ENCODE measurements at regions of chr2 and their contacts with region 1.

Region 1: DNA sequence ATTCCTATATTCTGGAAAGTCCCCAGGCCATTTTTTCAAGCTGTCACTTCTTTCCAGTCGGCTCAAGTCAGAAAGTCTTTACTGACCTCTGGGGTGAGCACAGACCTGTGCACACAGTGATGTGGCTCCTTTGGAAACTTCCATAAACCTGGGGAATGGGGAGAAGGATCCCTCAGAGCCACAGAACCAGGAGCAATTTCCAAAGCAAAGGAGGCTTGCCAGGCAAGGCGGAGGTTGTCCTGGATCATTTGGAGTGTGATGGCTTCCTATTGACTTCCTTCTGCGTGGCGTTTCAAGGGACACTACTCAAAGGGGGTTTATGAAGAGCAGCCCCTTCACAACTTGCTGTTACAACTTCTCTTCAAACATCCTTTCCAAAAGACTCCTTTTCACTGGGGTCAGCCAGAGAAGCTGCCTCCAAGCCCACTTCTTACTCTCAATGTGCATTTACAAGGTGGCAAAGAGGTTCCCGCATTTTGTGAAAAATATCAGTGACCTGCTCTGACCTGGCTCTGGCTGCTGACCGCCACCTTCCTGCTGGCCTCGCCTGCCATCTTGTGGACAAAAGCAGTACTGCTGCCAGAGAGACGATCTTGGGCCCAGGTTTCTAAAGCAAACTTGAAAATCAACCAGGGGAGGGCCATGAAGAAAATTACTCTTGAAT is 18.2 kb upstream of the TMEM247 start:
- DNase-seq: peak; percentile 65 to 86
- H3K4me3 ChIP-seq: no peak overlapping the region
- H3K27ac ChIP-seq: no peak overlapping the region
- H3K4me1 ChIP-seq: peaks cover 7% of the 10 kb centered on the region
- H3K27me3 ChIP-seq: no peaks in the 10 kb centered on the region
- CTCF ChIP-seq: peak; percentile 100

Region 2: GRCh38 chr2:45643543-45644542 is 817.3 kb before region 1 on chr2:
- CTCF ChIA-PET with region 1: no interaction called
- POLR2A ChIA-PET with region 1: no interaction called
- intact Hi-C with region 1: loop called (anchors 2 kb)
- DNase-seq: peak in 1 of 2 experiments; percentile 72
- H3K4me3 ChIP-seq: peak overlapping the region; percentile 61
- H3K27ac ChIP-seq: no peak overlapping the region
- H3K4me1 ChIP-seq: peaks cover 9% of the 10 kb centered on the region; the same call in 1 of the 2 replicates
- H3K27me3 ChIP-seq: no peaks in the 10 kb centered on the region
- CTCF ChIP-seq: peak; percentile 99

Region 3: DNA sequence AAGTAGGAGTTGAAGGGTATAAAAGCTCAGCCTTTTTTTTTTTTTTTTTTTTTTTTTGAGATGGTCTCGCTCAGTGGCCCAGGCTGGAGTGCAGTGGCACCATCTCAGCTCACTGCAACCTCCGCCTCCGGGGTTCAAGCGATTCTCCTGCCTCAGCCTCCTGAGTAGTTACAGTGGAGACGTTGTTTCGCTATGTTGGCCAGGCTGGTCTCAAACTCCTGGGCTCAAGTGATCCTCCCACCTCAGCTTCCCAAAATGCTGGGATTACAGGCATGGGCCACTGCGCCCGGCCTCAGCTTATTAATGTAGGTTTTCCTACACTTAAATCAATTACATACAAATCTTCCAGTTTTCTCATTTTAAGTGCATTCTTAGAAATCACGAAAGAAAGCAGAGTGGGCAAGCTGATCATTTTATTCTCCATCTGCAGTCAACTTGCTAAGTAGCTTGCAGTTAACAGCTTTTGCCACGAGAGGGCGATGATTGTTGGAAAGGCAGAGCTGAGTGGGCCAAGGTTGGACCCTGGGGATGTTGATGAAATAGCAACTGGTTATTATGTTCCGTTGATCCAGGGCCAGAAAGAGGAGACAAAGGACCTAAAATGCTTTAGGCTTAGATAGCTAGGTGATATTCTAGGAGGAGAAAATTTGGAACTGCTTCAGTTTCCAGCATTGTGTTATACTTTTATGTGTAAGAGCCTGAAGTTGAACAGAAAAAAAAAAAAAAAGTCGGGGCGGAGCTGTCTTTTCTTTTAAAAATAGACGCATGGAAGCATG is 398.3 kb before region 1 on chr2:
- CTCF ChIA-PET with region 1: interaction called, 3 read pairs
- POLR2A ChIA-PET with region 1: no interaction called
- intact Hi-C with region 1: loop called (anchors 1 kb)
- DNase-seq: peak; percentile 65 to 76
- H3K4me3 ChIP-seq: no peak overlapping the region
- H3K27ac ChIP-seq: no peak overlapping the region
- H3K4me1 ChIP-seq: peaks cover 40% of the 10 kb centered on the region
- H3K27me3 ChIP-seq: no peaks in the 10 kb centered on the region
- CTCF ChIP-seq: peak; percentile 99

Region 4: GRCh38 chr2:46364797-46365457 is 96.2 kb before region 1 on chr2:
- CTCF ChIA-PET with region 1: no interaction called
- POLR2A ChIA-PET with region 1: no interaction called
- intact Hi-C with region 1: loop called (anchors 2 kb)
- DNase-seq: peak; percentile 35 to 49
- H3K4me3 ChIP-seq: no peak overlapping the region
- H3K27ac ChIP-seq: no peak overlapping the region
- H3K4me1 ChIP-seq: 0 out of 2 replicates have a peak, but pooled peaks cover 12% of the 10 kb centered on the region
- H3K27me3 ChIP-seq: no peaks in the 10 kb centered on the region
- CTCF ChIP-seq: peak; percentile 98

Region 5: GRCh38 chr2:46505472-46505783 is 44.3 kb after region 1 on chr2:
- CTCF ChIA-PET with region 1: no interaction called
- POLR2A ChIA-PET with region 1: interaction called, 15 read pairs
- intact Hi-C with region 1: no loop called
- DNase-seq: no peak
- H3K4me3 ChIP-seq: no peak overlapping the region
- H3K27ac ChIP-seq: no peak overlapping the region
- H3K4me1 ChIP-seq: 0 out of 2 replicates have a peak, but pooled peaks cover 3% of the 10 kb centered on the region
- H3K27me3 ChIP-seq: no peaks in the 10 kb centered on the region
- CTCF ChIP-seq: no peak

Measured in PC-9 (cell line).